ENCODE measurements at regions of chr1 and their contacts with region 1.

Region 1: GRCh38 chr1:198937231-198938031 is 298.6 kb downstream of the PTPRC start:
- DNase-seq: peak in 8 of 9 experiments; percentile 15 to 86 (median 33)
- ATAC-seq: peak; percentile 84
- H3K4me3 ChIP-seq: peak overlapping the region; percentile 42 to 59
- H3K4me3 Mint-ChIP-seq: peak overlapping the region; percentile 87
- H3K27ac ChIP-seq: peak overlapping the region; percentile 39 to 60
- H3K27ac Mint-ChIP-seq: peak overlapping the region; percentile 91
- H3K4me1 ChIP-seq: peaks cover 28% of the 10 kb centered on the region
- H3K4me1 Mint-ChIP-seq: peaks cover 25% of the 10 kb centered on the region
- H3K27me3 ChIP-seq: no peaks in the 10 kb centered on the region
- H3K27me3 Mint-ChIP-seq: no peaks in the 10 kb centered on the region
- CTCF ChIP-seq: no peak

Region 2: GRCh38 chr1:198756470-198756869 is 181.0 kb before region 1 on chr1:
- CTCF ChIA-PET with region 1: no interaction called
- POLR2A ChIA-PET with region 1: no interaction called
- intact Hi-C with region 1: loop called in 1 of 2 experiments (anchors 5 kb)
- DNase-seq: peak in 1 of 9 experiments; percentile 34
- ATAC-seq: peak; percentile 30
- H3K4me3 ChIP-seq: no peak overlapping the region
- H3K4me3 Mint-ChIP-seq: no peak overlapping the region
- H3K27ac ChIP-seq: no peak overlapping the region
- H3K27ac Mint-ChIP-seq: no peak overlapping the region
- H3K4me1 ChIP-seq: no peaks in the 10 kb centered on the region
- H3K4me1 Mint-ChIP-seq: peaks cover 24% of the 10 kb centered on the region
- H3K27me3 ChIP-seq: no peaks in the 10 kb centered on the region
- H3K27me3 Mint-ChIP-seq: no peaks in the 10 kb centered on the region
- CTCF ChIP-seq: no peak

Region 3: GRCh38 chr1:198771563-198772153 is 165.8 kb before region 1 on chr1:
- CTCF ChIA-PET with region 1: no interaction called
- POLR2A ChIA-PET with region 1: no interaction called
- intact Hi-C with region 1: loop called in 1 of 2 experiments (anchors 10 kb)
- DNase-seq: peak in 2 of 9 experiments; percentile 38 to 61
- ATAC-seq: no peak
- H3K4me3 ChIP-seq: no peak overlapping the region
- H3K4me3 Mint-ChIP-seq: no peak overlapping the region
- H3K27ac ChIP-seq: no peak overlapping the region
- H3K27ac Mint-ChIP-seq: no peak overlapping the region
- H3K4me1 ChIP-seq: no peaks in the 10 kb centered on the region
- H3K4me1 Mint-ChIP-seq: peaks cover 2% of the 10 kb centered on the region
- H3K27me3 ChIP-seq: no peaks in the 10 kb centered on the region
- H3K27me3 Mint-ChIP-seq: no peaks in the 10 kb centered on the region
- CTCF ChIP-seq: peak; percentile 65

Region 4: DNA sequence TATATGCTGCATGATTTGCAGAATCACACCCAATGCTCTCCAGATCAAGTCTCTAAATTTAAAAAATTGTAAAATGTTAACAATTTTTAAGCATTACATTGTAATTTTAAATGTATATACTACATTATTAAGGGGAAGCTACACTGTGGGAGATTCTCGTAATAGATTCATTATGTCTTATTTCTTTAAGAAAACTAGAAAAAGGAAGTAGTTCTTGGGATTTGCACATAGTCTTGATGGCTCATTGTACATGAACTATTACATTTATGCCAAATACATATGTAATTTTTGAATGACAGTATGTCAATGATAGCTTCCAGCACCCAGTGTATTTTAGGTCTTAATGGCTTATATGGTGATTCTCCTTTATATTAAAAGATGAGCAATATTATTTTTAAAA is 48.3 kb before region 1 on chr1:
- CTCF ChIA-PET with region 1: no interaction called
- POLR2A ChIA-PET with region 1: no interaction called
- intact Hi-C with region 1: loop called in 1 of 2 experiments (anchors 5 kb)
- DNase-seq: no peak
- ATAC-seq: no peak
- H3K4me3 ChIP-seq: no peak overlapping the region
- H3K4me3 Mint-ChIP-seq: no peak overlapping the region
- H3K27ac ChIP-seq: no peak overlapping the region
- H3K27ac Mint-ChIP-seq: no peak overlapping the region
- H3K4me1 ChIP-seq: no peaks in the 10 kb centered on the region
- H3K4me1 Mint-ChIP-seq: peaks cover 8% of the 10 kb centered on the region
- H3K27me3 ChIP-seq: no peaks in the 10 kb centered on the region
- H3K27me3 Mint-ChIP-seq: no peaks in the 10 kb centered on the region
- CTCF ChIP-seq: no peak

Region 5: GRCh38 chr1:198919667-198920398 is 17.6 kb before region 1 on chr1:
- CTCF ChIA-PET with region 1: interaction called, 3 read pairs
- POLR2A ChIA-PET with region 1: no interaction called
- intact Hi-C with region 1: loop called in 1 of 2 experiments (anchors 2 kb)
- DNase-seq: peak in 2 of 9 experiments; percentile 18 to 57
- ATAC-seq: peak; percentile 78
- H3K4me3 ChIP-seq: no peak overlapping the region
- H3K4me3 Mint-ChIP-seq: peak overlapping the region; percentile 79
- H3K27ac ChIP-seq: peak overlapping the region in 1 of 2 experiments; percentile 58
- H3K27ac Mint-ChIP-seq: peak overlapping the region; percentile 85
- H3K4me1 ChIP-seq: peaks cover 16% of the 10 kb centered on the region
- H3K4me1 Mint-ChIP-seq: peaks cover 73% of the 10 kb centered on the region
- H3K27me3 ChIP-seq: no peaks in the 10 kb centered on the region
- H3K27me3 Mint-ChIP-seq: no peaks in the 10 kb centered on the region
- CTCF ChIP-seq: no peak